ENCODE measurements at regions of chr4 and their contacts with region 1.

Region 1: DNA sequence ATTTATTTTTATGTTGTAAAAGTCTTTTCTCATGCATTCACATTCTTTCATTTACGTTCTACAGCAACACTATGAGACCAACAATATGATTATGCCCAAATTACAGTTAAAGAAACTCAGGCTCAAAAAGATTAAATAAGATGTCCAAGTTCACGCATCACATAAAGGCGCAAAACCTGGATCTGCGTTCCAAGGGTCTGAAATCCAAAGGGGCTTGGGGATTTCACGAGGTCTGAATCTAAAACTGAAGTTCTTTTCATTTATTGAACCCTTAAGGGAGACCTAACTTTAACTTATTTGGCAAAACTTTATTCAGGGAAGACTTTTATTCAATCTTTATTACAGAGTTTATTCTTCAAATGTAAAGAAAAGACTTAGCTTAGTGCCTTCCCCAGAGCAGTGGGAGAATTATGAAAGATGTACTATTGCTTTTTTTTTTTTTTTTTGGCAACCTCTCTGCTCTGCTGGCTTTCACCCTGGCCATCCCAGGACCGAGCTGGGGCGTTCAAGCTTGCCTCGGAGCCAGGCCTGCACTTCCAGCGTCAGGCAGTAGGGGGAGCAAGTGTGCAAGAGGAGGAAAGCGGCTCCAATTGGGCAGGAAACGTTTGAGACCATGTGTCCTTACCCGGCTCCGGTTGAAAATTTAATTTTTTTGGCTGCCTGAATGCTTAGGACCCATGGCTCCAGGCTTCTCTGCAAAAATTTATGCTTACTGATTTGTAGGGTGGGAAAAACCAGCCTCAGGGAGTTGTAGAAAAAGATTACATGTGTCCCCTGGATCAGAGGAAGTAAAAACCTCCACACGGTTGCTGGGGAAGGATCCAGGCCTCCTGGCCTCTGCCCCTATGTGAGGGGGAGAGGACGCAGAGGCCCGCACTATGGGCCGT is 344.3 kb upstream of the KLF3 start:
- DNase-seq: peak; percentile 88

Region 2: GRCh38 chr4:38381788-38382187 is 62.1 kb after region 1 on chr4:
- in situ Hi-C with region 1: no loop called
- DNase-seq: no peak

Region 3: GRCh38 chr4:38663801-38664705 is 344.4 kb after region 1 on chr4 and contains the start of gene KLF3:
- in situ Hi-C with region 1: loop called (anchors 10 kb)
- DNase-seq: peak; percentile 87
- total RNA-seq, gene KLF3: 5.7 and 6.6 TPM in 2 replicates

Region 4: DNA sequence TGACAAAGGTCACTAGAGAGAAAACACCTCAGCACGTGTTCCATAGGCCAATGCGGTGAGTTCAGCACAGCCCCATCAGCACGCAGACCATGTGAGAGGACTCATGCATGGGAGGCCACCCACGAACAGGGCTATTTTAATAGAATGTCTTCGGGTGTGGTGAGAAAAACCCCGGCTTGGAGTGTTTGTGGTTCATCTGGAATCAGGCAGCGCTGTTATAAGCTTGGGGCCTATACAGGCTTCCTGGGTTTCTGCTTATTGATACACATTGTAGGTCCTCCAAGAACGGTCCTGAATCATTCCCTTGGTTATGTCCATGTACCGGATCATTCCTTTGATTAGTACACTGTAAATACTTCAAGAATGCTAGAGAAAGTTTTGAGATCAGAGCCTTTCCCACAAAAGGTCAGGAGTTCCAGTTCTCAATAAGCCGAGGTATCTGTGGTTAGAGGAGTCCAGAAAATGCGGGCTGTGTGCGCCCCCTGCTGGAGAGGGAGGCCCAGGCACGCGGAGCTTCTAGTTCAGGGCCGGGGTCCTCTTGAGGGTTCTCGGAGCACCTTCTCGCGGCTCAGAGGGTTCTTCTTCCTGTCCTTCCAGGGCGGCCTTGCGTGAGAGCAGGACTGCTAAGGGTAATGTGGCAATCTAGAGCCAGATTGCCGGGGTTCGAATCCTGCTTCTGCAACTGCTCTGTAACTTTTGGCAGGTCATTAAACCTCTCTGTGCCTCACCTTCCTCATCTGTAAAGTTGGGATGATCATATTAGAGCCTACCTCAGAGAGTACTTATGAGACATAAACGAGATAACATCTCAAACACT is 411.3 kb after region 1 on chr4:
- in situ Hi-C with region 1: loop called (anchors 10 kb)
- DNase-seq: peak; percentile 63

Region 5: GRCh38 chr4:38856524-38857337 is 537.0 kb after region 1 on chr4 and contains the start of gene TLR6:
- in situ Hi-C with region 1: loop called (anchors 10 kb)
- DNase-seq: peak; percentile 87
- total RNA-seq, gene TLR6: 0.96 and 6.2 TPM in 2 replicates

Measured in Caki2 (cell line).